IMR-90 (cell line): ENCODE measurements at regions of chr12 and their contacts with region 1.

Region 1: DNA sequence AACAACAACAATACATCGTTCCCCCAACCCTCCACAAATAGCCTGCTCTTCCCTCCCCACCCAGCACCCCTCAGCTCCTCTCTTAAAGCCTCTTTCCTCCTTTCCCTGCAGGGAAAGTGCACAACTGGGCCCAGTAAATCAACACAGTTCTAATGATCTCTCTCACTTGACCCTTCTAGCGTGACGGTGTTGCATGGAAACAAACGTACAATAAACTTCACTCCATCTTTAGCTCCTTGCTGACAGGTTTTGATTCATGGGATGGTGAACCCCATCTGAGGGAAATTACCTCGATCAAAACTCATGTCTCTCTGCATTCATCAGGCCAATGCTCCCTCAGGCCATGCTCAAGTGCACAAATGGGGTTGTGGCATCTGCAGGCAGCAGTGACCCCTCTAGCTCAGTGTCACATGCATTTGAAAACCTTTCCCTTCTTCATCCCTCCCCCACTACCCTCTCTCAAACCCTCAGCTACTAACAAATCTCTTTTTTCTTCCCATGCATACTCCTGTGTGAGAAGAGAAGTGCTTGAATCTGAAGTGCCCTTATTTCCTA is 22.9 kb downstream of the GDF11 start:
- DNase-seq: no peak
- ATAC-seq: no peak
- H3K4me3 ChIP-seq: no peak overlapping the region
- H3K27ac ChIP-seq: no peak overlapping the region
- H3K4me1 ChIP-seq: peaks cover 2% of the 10 kb centered on the region; the same call in 1 of the 2 replicates
- H3K27me3 ChIP-seq: no peaks in the 10 kb centered on the region
- CTCF ChIP-seq: no peak
- POLR2A ChIP-seq: no peak
- RAD21 ChIP-seq: no peak

Region 2: GRCh38 chr12:55797068-55797467 is 31.3 kb after region 1 on chr12:
- CTCF ChIA-PET with region 1: no interaction called
- POLR2A ChIA-PET with region 1: no interaction called
- dilution Hi-C with region 1: no loop called
- in situ Hi-C with region 1: loop called (anchors 5 kb)
- intact Hi-C with region 1: no loop called
- DNase-seq: peak; percentile 56
- ATAC-seq: peak; percentile 76
- H3K4me3 ChIP-seq: no peak overlapping the region
- H3K27ac ChIP-seq: no peak overlapping the region
- H3K4me1 ChIP-seq: no peaks in the 10 kb centered on the region; the same call in 1 of the 2 replicates
- H3K27me3 ChIP-seq: no peaks in the 10 kb centered on the region
- CTCF ChIP-seq: peak; percentile 58
- POLR2A ChIP-seq: no peak
- RAD21 ChIP-seq: peak; percentile 63

Region 3: DNA sequence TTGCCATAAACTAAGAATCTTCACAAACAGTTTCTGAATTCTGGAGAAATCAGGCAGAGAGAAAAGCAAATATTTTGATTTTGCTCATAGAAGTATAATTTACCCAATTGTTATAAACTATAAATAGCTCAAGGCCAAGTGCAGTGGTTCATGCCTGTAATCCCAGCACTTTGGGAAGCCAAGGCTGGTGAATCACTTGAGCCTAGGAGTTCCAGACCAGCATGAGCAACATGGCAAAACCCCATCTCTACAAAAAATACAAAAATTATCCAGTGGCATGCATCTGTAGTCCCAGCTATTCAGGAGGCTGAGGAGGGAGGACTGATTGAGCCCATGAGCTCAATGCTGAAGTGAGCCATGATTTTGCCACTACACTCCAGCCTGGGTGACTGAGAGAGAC is 96.5 kb after region 1 on chr12:
- CTCF ChIA-PET with region 1: no interaction called
- POLR2A ChIA-PET with region 1: no interaction called
- dilution Hi-C with region 1: no loop called
- in situ Hi-C with region 1: no loop called
- intact Hi-C with region 1: no loop called
- DNase-seq: peak; percentile 33
- ATAC-seq: no peak
- H3K4me3 ChIP-seq: no peak overlapping the region
- H3K27ac ChIP-seq: no peak overlapping the region
- H3K4me1 ChIP-seq: no peaks in the 10 kb centered on the region
- H3K27me3 ChIP-seq: no peaks in the 10 kb centered on the region
- CTCF ChIP-seq: no peak
- POLR2A ChIP-seq: no peak
- RAD21 ChIP-seq: no peak

Region 4: DNA sequence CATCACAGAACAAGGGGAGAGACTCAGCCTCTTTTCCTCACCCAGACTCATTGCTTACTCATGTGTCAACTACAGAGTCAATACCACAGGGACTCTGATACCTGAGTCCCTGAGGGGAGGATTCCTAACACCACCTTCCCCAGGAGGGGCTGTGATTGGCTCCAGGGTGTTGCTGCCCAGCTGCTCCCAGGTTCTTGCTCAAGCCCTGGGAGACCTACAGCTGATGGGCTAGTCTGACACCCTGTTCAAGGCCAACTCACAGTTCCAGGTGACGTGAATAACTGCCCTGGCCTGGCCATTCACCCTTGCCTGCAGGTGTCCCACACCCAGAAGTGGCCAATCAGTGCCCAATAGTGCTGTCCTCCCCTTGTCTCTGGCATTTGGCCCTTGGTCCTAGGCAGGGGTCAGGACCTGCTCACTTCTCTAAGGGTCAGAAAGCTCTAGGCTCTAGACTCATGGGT is 711.2 kb after region 1 on chr12:
- CTCF ChIA-PET with region 1: no interaction called
- POLR2A ChIA-PET with region 1: no interaction called
- dilution Hi-C with region 1: no loop called
- in situ Hi-C with region 1: no loop called
- intact Hi-C with region 1: no loop called
- DNase-seq: no peak
- ATAC-seq: no peak
- H3K4me3 ChIP-seq: no peak overlapping the region
- H3K27ac ChIP-seq: no peak overlapping the region
- H3K4me1 ChIP-seq: no peaks in the 10 kb centered on the region
- H3K27me3 ChIP-seq: no peaks in the 10 kb centered on the region
- CTCF ChIP-seq: no peak
- POLR2A ChIP-seq: no peak
- RAD21 ChIP-seq: no peak